Ovary (tissue), 10 donors: ENCODE measurements at regions of chr11 and their contacts with region 1.

Region 1: DNA sequence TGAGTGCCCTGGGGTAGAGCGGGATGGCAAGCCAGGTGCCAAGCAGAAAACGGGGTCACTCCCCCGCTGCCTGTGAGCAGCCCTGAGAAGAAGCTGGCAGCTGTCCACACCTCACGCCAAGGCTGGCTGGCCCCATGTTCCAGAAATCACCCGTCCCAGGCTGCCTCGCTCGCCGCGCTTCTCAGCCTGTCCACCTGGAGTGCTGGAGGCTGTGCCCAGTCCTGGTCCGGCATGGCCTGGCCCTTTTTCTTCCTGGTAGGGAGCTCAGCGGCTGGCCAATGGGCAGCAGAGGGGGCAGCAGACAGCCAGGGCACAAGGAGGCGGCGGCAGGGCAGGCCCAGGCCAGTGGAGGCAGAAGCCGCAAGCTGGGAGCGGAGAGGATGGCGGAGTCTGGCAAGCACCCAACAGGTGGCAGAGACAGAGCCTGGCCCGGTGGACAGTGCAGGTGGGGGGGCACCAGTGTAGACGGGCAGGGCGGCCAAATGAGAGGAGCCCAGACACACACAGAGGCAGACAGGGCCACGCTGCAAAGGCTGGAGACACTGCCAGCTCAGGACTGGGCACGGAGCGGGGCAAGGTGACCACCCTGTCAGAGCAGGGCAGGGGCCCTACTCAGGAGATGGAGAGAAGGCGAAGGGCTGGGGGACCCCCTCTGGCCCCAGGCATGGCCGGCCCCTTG is 37.2 kb upstream of the TH start:
- DNase-seq: peak in 4 of 5 donors; percentile 7 to 34 (median 16)
- H3K4me3 ChIP-seq: no peak overlapping the region
- H3K27ac ChIP-seq: no peak overlapping the region
- H3K4me1 ChIP-seq: no peaks in the 10 kb centered on the region
- H3K27me3 ChIP-seq: no peaks in the 10 kb centered on the region
- CTCF ChIP-seq: no peak
- EP300 ChIP-seq: no peak
- POLR2A ChIP-seq: no peak

Region 2: GRCh38 chr11:2912498-2912897 is 703.7 kb after region 1 on chr11:
- intact Hi-C with region 1: loop called in 1 of 4 experiments (anchors 10 kb)
- DNase-seq: peak in 1 of 5 donors; percentile 9
- H3K4me3 ChIP-seq: no peak overlapping the region
- H3K27ac ChIP-seq: no peak overlapping the region
- H3K4me1 ChIP-seq: no peaks in the 10 kb centered on the region
- H3K27me3 ChIP-seq: no peaks in the 10 kb centered on the region
- CTCF ChIP-seq: no peak
- EP300 ChIP-seq: no peak
- POLR2A ChIP-seq: no peak